Heart right ventricle (tissue), 16 donors: ENCODE measurements at regions of chr3 and their contacts with region 1.

Region 1: DNA sequence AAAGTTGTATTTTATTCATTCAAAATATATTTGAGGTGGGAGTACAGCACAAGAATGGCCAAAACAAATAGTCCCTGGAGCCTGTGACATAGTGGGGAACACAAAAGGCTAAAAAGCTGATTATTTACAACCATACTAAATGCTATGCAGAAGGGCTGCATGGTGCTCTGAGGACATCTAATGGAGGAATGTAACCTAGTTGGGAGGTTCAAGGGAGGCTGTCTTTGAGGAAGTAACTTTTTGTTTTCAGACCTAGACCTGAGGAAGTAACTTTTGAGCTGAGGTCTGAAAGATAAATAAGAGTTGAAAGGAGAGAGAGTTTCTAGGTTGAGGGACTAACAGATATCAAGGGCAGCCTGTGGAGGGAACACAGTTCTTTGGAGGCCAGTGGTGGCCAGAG is 34.8 kb upstream of the RASA2 start:
- DNase-seq: no peak
- ATAC-seq: peak; percentile 53 to 82 (median 75)
- H3K4me3 ChIP-seq: no peak overlapping the region
- H3K27ac ChIP-seq: peak overlapping the region in 6 of 10 donors; percentile 9 to 59 (median 22)
- H3K4me1 ChIP-seq: peaks cover 3 to 69% (median 35%) of the 10 kb centered on the region in 9 donors
- H3K27me3 ChIP-seq: no peaks in the 10 kb centered on the region
- CTCF ChIP-seq: peak; percentile 60 to 91 (median 75)

Region 2: GRCh38 chr3:141231101-141231935 is 220.7 kb before region 1 on chr3 and contains the start of gene PXYLP1:
- intact Hi-C with region 1: loop called in 2 of 10 experiments (anchors 10 kb)
- DNase-seq: peak; percentile 93 to 96
- ATAC-seq: peak; percentile 94 to 98 (median 96)
- H3K4me3 ChIP-seq: peak within 1 kb of the TSS; percentile 83 to 97 (median 88)
- H3K27ac ChIP-seq: peak within 1 kb of the TSS; percentile 56 to 95 (median 92)
- H3K4me1 ChIP-seq: peaks cover 2 to 34% (median 20%) of the 10 kb centered on the region in 9 donors
- H3K27me3 ChIP-seq: no peaks in the 10 kb centered on the region
- CTCF ChIP-seq: peak; percentile 56 to 92 (median 75)
- total RNA-seq, gene PXYLP1: 8.7 to 33.5 (median 19.9) TPM

Region 3: GRCh38 chr3:141311496-141312353 is 140.3 kb before region 1 on chr3:
- intact Hi-C with region 1: loop called (anchors 2 to 5 kb)
- DNase-seq: peak; percentile 98 to 99
- ATAC-seq: peak; percentile 97 to 100 (median 99)
- H3K4me3 ChIP-seq: peak overlapping the region; percentile 42 to 79 (median 72)
- H3K27ac ChIP-seq: peak overlapping the region; percentile 19 to 89 (median 86)
- H3K4me1 ChIP-seq: peaks cover 4 to 26% (median 16%) of the 10 kb centered on the region in 9 donors
- H3K27me3 ChIP-seq: no peaks in the 10 kb centered on the region
- CTCF ChIP-seq: peak; percentile 57 to 93 (median 80)

Region 4: DNA sequence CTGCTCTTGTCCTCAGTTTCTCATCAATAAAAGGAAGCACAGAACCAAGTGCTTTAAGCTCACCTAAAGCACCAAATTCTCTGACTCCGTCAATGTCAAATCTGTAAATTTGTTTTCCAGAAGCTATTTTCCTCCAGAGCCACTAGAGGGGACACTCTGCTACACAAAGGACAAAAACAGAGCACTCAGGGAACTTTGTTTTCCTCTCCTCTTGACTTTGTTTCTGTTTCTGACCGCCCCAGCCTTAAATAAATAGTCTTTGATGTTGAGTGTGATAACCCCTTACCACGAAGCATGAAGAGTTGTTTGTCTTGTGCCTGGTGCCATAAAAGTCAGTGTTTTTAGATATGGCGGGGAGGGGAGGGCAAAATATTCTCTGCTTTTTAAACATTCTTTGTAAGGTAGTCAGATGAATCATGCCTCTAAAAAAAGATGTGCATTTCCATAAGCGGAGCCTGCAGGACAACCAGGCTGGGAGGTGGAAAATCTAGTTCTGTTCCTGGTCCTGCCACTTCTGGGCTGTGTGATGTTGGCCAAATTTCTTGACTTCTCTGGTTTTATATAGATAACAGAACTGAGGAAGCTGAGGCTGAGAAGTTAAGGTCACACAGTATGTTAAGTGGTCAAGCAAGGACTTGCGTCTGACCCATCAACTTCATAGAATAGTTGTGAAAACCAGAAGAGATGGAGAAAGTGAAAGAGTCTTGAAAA is 91.0 kb before region 1 on chr3:
- intact Hi-C with region 1: loop called (anchors 1 to 5 kb)
- DNase-seq: peak in 1 of 2 donors; percentile 46
- ATAC-seq: peak; percentile 67 to 89 (median 86)
- H3K4me3 ChIP-seq: peak overlapping the region in 6 of 10 donors; percentile 7 to 37 (median 26)
- H3K27ac ChIP-seq: peak overlapping the region in 6 of 10 donors; percentile 2 to 61 (median 44)
- H3K4me1 ChIP-seq: peaks cover 0 to 16% (median 5%) of the 10 kb centered on the region in 9 donors
- H3K27me3 ChIP-seq: no peaks in the 10 kb centered on the region
- CTCF ChIP-seq: peak; percentile 66 to 93 (median 78)

Region 5: GRCh38 chr3:141426404-141427034 is 25.5 kb before region 1 on chr3:
- intact Hi-C with region 1: no loop called
- DNase-seq: peak; percentile 75 to 95
- ATAC-seq: peak; percentile 45 to 87 (median 82)
- H3K4me3 ChIP-seq: no peak overlapping the region
- H3K27ac ChIP-seq: peak overlapping the region in 9 of 10 donors; percentile 47 to 87 (median 75)
- H3K4me1 ChIP-seq: peaks cover 21 to 100% (median 83%) of the 10 kb centered on the region in 9 donors
- H3K27me3 ChIP-seq: no peaks in the 10 kb centered on the region
- CTCF ChIP-seq: no peak

Region 6: GRCh38 chr3:141644931-141645330 is 192.9 kb after region 1 on chr3:
- intact Hi-C with region 1: loop called in 1 of 10 experiments (anchors 10 kb)
- DNase-seq: peak; percentile 69 to 84
- ATAC-seq: peak; percentile 62 to 90 (median 80)
- H3K4me3 ChIP-seq: no peak overlapping the region
- H3K27ac ChIP-seq: no peak overlapping the region
- H3K4me1 ChIP-seq: peaks cover 0 to 7% (median 0%) of the 10 kb centered on the region in 9 donors
- H3K27me3 ChIP-seq: no peaks in the 10 kb centered on the region
- CTCF ChIP-seq: peak; percentile 34 to 82 (median 64)